ENCODE measurements at regions of chr22 and their contacts with region 1.

Region 1: GRCh38 chr22:38201710-38202436 is at the start of gene MAFF:
- DNase-seq: peak; percentile 77 to 93 (median 80)
- H3K4me3 ChIP-seq: peak within 1 kb of the TSS; percentile 80 to 90
- H3K4me3 Mint-ChIP-seq: peak within 1 kb of the TSS; percentile 87 to 93 (median 90)
- H3K27ac ChIP-seq: peak within 1 kb of the TSS; percentile 81
- H3K27ac Mint-ChIP-seq: peak within 1 kb of the TSS; percentile 90 to 98 (median 97)
- H3K4me1 ChIP-seq: peaks cover 32% of the 10 kb centered on the region
- H3K4me1 Mint-ChIP-seq: peaks cover 18 to 47% (median 26%) of the 10 kb centered on the region in 4 donors
- H3K27me3 ChIP-seq: no peaks in the 10 kb centered on the region
- H3K27me3 Mint-ChIP-seq: no peaks in the 10 kb centered on the region
- total RNA-seq, gene MAFF: 6.8 TPM

Region 2: DNA sequence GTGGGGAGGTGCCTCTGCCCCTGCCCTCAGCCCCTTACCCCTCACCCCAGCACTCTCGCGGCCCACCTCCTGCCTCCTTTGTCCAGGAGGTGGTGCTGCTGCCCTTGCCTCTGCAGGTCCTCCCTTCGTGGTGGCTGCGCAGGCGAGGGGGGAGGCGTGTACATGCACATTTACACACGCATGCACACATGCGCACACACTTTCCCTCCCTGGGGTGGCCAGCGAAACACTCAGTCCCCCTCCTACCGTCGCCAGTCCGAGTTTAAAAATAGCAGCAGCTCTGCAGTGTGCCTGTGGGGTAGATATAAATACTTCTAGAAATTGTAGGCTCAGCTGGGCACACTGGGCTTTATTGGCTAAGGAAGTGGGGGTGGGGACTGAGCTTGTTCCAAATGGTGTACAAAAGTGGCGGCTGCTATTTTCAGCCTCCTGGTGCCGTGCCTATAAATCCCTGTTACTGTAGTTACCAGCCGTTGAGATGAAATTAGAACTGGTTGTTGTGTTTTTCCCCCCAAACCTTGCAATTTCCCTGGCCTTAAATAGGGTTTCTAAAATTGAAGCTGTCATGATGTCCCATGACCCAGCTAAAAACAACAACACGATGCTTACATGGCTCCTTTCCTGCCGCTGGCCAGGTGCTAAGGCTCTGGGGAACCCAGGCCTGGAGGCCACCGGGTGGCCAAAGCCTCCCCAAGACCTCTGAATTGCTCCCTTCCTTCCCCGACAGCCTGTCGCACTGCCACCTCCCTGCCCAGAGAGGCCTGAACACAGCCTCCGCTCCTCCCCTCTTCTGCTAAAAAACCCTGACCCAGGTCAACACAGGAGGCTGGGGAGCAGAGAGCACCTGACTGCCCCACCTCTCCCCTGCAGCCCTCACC is 132.3 kb before region 1 on chr22:
- CTCF ChIA-PET with region 1: no interaction called
- POLR2A ChIA-PET with region 1: no interaction called
- intact Hi-C with region 1: no loop called
- DNase-seq: no peak
- H3K4me3 ChIP-seq: no peak overlapping the region
- H3K4me3 Mint-ChIP-seq: no peak overlapping the region
- H3K27ac ChIP-seq: no peak overlapping the region
- H3K27ac Mint-ChIP-seq: no peak overlapping the region
- H3K4me1 ChIP-seq: no peaks in the 10 kb centered on the region
- H3K4me1 Mint-ChIP-seq: no peaks in the 10 kb centered on the region
- H3K27me3 ChIP-seq: no peaks in the 10 kb centered on the region
- H3K27me3 Mint-ChIP-seq: no peaks in the 10 kb centered on the region

Region 3: DNA sequence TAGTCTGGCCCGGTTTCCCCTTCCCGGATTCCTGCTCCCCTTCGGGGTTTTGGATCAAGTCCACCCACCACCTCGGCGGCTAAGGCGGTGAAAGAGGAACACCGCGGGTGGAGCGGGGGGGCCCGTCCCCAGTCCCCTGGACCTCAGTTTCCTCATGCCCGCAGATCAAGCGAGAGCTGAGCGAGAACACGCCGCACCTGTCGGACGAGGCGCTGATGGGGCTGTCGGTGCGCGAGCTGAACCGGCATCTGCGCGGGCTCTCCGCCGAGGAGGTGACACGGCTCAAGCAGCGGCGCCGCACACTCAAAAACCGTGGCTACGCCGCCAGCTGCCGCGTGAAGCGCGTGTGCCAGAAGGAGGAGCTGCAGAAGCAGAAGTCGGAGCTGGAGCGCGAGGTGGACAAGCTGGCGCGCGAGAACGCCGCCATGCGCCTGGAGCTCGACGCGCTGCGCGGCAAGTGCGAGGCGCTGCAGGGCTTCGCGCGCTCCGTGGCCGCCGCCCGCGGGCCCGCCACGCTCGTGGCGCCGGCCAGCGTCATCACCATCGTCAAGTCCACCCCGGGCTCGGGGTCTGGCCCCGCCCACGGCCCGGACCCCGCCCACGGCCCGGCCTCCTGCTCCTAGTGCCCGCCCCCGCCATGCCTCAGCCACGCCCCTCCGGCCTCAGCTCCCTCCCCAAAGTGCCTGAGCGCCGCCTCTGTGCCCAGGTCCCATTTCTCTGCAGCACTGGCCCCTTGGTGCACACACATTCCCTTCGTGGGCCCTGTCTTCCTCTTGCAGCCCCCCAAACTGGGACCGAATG is 12.6 kb after region 1 on chr22:
- CTCF ChIA-PET with region 1: interaction called, 13 read pairs
- POLR2A ChIA-PET with region 1: interaction called, 72 read pairs
- intact Hi-C with region 1: loop called (anchors 1 kb)
- DNase-seq: peak; percentile 80 to 85 (median 82)
- H3K4me3 ChIP-seq: peak overlapping the region in 1 of 2 donors; percentile 19
- H3K4me3 Mint-ChIP-seq: peak overlapping the region; percentile 24 to 78 (median 66)
- H3K27ac ChIP-seq: peak overlapping the region; percentile 43
- H3K27ac Mint-ChIP-seq: peak overlapping the region; percentile 42 to 91 (median 75)
- H3K4me1 ChIP-seq: peaks cover 29% of the 10 kb centered on the region
- H3K4me1 Mint-ChIP-seq: peaks cover 15 to 49% (median 34%) of the 10 kb centered on the region in 4 donors
- H3K27me3 ChIP-seq: no peaks in the 10 kb centered on the region
- H3K27me3 Mint-ChIP-seq: no peaks in the 10 kb centered on the region

Measured in CD4-positive, alpha-beta memory T cell (primary cell).